Lower lobe of right lung (tissue), 2 donors: ENCODE measurements at regions of chr9 and their contacts with region 1.

Region 1: GRCh38 chr9:69054989-69055388 is 19.4 kb downstream of the FXN start:
- DNase-seq: peak; percentile 73
- ATAC-seq: peak; percentile 91 to 96
- H3K4me3 ChIP-seq: no peak overlapping the region
- H3K27ac ChIP-seq: peak overlapping the region; percentile 3
- H3K4me1 ChIP-seq: peaks cover 11% of the 10 kb centered on the region
- H3K27me3 ChIP-seq: no peaks in the 10 kb centered on the region
- CTCF ChIP-seq: no peak

Region 2: DNA sequence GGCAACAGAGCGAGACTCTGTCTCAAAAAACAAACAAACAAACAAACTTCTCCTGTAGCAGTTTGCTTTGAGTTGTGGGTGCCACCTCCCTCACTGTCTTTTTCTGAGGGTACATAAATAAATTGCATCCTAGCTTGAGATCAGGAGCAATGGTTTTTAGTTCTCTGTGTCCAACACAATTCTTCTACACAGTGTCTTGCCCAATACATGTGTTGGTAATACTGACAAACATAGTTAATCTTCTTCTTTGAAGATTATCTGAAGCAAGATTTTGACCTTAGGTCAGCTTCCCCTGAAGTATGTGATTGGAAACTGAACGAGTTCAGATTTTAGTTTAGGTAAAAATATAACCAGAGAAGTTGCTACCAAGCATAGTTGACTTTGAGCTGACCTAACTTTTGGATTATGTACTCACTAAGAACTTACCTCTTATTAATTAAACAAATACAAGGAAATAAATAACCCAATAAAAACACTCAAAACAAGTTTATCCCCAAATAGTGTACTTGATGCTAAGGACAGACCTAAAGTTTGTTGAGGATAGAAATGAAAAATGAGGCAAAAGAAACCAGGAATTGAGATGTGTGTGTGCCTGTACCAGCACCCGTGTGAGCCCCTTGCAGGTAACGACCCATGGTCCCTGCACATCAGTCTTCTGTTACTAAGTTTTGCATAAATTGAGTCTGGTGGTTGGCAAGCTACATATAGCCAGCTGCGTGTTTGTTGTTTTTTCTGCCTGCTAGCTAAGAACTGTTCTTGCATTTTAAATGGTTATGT is 135.3 kb after region 1 on chr9:
- intact Hi-C with region 1: loop called (anchors 5 kb)
- DNase-seq: no peak
- ATAC-seq: no peak
- H3K4me3 ChIP-seq: no peak overlapping the region
- H3K27ac ChIP-seq: peak overlapping the region; percentile 53
- H3K4me1 ChIP-seq: peaks cover 72% of the 10 kb centered on the region
- H3K27me3 ChIP-seq: no peaks in the 10 kb centered on the region
- CTCF ChIP-seq: no peak